ENCODE measurements at regions of chr15 and their contacts with region 1.

Region 1: GRCh38 chr15:65792130-65792987 is at the start of gene DENND4A:
- DNase-seq: peak; percentile 99
- H3K4me3 Mint-ChIP-seq: peak within 1 kb of the TSS; percentile 83
- H3K27ac Mint-ChIP-seq: peak within 1 kb of the TSS; percentile 95
- H3K4me1 Mint-ChIP-seq: peaks cover 69% of the 10 kb centered on the region
- H3K27me3 Mint-ChIP-seq: no peaks in the 10 kb centered on the region
- total RNA-seq, gene DENND4A: 40.4 to 41.1 TPM

Region 2: GRCh38 chr15:65766422-65767263 is 25.7 kb before region 1 on chr15:
- CTCF ChIA-PET with region 1: interaction called, 3 read pairs
- POLR2A ChIA-PET with region 1: interaction called, 25 read pairs
- DNase-seq: no peak
- H3K4me3 Mint-ChIP-seq: no peak overlapping the region
- H3K27ac Mint-ChIP-seq: no peak overlapping the region
- H3K4me1 Mint-ChIP-seq: peaks cover 52% of the 10 kb centered on the region
- H3K27me3 Mint-ChIP-seq: no peaks in the 10 kb centered on the region

Region 3: DNA sequence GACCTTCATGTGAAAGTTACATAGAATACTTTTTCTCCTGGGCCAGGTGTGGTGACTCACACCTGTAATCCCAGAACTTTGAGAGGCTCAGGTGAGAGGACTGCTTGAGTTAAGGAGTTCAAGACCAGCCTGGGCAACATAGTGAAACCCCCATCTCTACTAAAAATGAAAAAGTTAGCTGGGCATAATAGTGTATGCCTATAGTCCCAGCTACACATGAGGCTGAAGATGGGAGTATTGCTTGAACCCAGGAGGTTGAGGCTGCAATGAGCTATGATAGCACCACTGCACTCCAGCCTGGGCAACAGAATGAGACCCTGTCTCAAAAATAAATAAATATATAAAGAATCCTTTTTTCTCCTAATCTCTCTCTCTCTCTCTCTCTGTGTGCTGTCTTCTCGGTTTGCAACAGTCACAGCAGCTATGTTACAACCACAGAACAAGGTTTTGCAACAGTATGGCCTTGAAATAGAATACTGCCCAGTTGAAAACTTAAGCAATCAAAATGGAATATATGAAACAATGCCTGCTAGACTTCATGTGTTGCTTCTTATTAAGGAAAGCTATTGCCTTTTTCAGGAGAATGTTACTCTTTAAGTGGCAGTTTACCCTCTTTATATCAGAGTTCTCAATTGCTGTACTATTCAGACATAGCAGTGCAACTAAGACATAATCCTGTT is 12.0 kb after region 1 on chr15:
- CTCF ChIA-PET with region 1: interaction called, 9 read pairs
- POLR2A ChIA-PET with region 1: interaction called, 115 read pairs
- DNase-seq: no peak
- H3K4me3 Mint-ChIP-seq: no peak overlapping the region
- H3K27ac Mint-ChIP-seq: peak overlapping the region; percentile 22
- H3K4me1 Mint-ChIP-seq: peaks cover 35% of the 10 kb centered on the region
- H3K27me3 Mint-ChIP-seq: no peaks in the 10 kb centered on the region

Region 4: DNA sequence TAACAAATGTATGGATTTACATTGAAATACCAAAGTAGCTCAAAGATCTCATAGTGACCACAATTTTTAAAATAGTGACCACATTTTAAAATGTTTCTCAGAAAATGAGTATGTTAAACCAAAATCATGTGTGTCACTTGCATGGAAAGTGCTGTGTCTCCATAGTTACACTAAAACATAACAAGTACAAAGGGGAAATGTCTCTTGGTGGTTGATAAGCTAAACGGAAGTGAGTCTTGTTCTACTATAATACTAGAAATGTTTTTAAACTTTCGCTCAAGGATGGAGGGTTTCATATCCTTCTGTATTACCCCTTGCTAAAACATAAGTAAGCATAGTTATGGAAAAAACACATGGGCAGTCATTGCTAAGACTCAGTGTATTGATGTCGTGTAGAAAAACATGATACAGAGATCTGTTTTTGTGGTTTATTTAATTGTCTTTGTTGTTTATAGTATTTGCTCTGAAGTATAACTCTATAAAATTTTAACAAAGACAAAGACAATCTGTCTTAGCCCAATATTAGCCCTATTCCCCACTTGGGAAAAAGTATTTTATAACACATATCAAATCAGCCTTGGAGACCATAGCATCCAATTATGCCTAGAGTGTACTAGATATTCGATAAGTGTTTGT is 26.7 kb after region 1 on chr15:
- CTCF ChIA-PET with region 1: interaction called, 34 read pairs
- POLR2A ChIA-PET with region 1: interaction called, 110 read pairs
- DNase-seq: no peak
- H3K4me3 Mint-ChIP-seq: peak overlapping the region; percentile 31
- H3K27ac Mint-ChIP-seq: peak overlapping the region; percentile 57
- H3K4me1 Mint-ChIP-seq: peaks cover 50% of the 10 kb centered on the region
- H3K27me3 Mint-ChIP-seq: peaks cover 7% of the 10 kb centered on the region

Region 5: GRCh38 chr15:65832549-65833364 is 40.4 kb after region 1 on chr15:
- CTCF ChIA-PET with region 1: interaction called, 10 read pairs
- POLR2A ChIA-PET with region 1: interaction called, 98 read pairs
- DNase-seq: peak; percentile 69
- H3K4me3 Mint-ChIP-seq: peak overlapping the region; percentile 61
- H3K27ac Mint-ChIP-seq: peak overlapping the region; percentile 98
- H3K4me1 Mint-ChIP-seq: peaks cover 56% of the 10 kb centered on the region
- H3K27me3 Mint-ChIP-seq: no peaks in the 10 kb centered on the region

Region 6: DNA sequence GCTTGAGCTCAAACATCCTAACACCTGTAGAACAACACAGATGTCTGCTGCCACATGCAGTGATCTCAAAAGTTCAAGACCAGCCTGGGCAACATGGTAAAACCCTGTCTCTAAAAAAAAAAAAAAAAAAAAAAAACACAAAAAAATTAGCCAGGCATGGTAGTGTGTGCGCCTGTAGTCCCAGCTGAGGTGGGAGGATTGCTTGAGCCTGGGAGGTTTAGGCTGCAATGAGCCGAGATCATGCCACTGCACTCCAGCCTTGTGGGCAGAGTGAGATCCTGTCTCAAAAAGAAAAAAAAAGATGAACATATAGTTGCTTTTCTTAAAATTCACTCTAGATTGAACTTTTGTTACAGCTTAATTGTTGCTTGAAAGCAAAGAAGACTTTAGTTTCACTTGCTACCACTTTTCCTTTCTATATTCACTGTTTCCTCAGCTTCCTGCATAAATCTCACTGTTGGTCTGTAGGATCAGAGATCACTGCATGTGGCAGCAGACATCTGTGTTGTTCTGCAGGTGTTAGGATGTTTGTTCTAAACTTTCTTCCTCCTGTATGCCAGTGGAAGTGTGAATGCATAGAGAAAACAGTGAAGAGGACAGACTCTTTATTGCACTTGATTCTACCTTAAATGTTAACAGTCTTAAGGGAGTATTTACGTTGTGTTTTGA is 89.5 kb after region 1 on chr15:
- CTCF ChIA-PET with region 1: no interaction called
- POLR2A ChIA-PET with region 1: no interaction called
- DNase-seq: no peak
- H3K4me3 Mint-ChIP-seq: no peak overlapping the region
- H3K27ac Mint-ChIP-seq: peak overlapping the region; percentile 16
- H3K4me1 Mint-ChIP-seq: peaks cover 54% of the 10 kb centered on the region
- H3K27me3 Mint-ChIP-seq: no peaks in the 10 kb centered on the region